ENCODE measurements at regions of chr3 and their contacts with region 1.

Region 1: GRCh38 chr3:42202217-42202865 is 63.6 kb downstream of the CCK start:
- DNase-seq: no peak
- H3K4me3 ChIP-seq: no peak overlapping the region
- H3K27ac ChIP-seq: no peak overlapping the region
- H3K4me1 ChIP-seq: no peaks in the 10 kb centered on the region
- H3K27me3 ChIP-seq: no peaks in the 10 kb centered on the region
- CTCF ChIP-seq: no peak

Region 2: DNA sequence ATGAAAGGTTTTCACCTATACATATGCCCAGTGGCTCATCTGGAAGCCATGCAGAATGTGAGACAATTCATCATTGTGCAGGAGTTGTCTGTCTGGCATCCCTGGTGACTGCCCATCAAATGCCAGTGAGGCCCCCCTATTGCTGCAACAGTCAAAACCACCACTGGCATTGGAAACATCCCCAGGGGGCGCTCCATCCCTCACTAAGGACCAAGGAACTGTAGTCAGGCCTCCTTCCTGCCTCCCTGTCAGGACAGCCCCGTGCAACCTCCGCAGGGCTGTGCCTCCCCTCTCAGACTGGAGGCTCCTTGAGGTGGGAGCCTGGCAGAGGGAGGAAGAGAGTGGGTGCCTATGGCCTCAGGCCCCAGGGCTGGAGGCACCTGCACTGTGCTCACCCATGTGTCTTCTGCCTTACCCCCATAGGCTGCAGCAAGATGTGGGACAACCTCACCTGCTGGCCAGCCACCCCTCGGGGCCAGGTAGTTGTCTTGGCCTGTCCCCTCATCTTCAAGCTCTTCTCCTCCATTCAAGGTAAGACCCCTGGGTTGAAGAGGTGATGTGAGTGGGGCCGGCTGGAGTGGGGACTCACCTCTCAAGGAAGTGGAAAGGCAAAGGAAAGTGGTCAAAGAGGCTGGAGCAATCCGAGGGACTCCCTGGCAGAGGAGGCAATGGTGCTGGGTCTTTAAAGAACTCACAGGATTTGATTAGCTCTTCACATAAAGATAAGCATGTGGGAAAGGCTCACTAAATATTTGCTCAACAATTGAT is 316.6 kb after region 1 on chr3:
- CTCF ChIA-PET with region 1: interaction called, 13 read pairs
- POLR2A ChIA-PET with region 1: no interaction called
- intact Hi-C with region 1: no loop called
- DNase-seq: no peak
- H3K4me3 ChIP-seq: no peak overlapping the region
- H3K27ac ChIP-seq: no peak overlapping the region
- H3K4me1 ChIP-seq: no peaks in the 10 kb centered on the region
- H3K27me3 ChIP-seq: no peaks in the 10 kb centered on the region
- CTCF ChIP-seq: no peak